Tibial artery (tissue), 4 donors: ENCODE measurements at regions of chr2 and their contacts with region 1.

Region 1: DNA sequence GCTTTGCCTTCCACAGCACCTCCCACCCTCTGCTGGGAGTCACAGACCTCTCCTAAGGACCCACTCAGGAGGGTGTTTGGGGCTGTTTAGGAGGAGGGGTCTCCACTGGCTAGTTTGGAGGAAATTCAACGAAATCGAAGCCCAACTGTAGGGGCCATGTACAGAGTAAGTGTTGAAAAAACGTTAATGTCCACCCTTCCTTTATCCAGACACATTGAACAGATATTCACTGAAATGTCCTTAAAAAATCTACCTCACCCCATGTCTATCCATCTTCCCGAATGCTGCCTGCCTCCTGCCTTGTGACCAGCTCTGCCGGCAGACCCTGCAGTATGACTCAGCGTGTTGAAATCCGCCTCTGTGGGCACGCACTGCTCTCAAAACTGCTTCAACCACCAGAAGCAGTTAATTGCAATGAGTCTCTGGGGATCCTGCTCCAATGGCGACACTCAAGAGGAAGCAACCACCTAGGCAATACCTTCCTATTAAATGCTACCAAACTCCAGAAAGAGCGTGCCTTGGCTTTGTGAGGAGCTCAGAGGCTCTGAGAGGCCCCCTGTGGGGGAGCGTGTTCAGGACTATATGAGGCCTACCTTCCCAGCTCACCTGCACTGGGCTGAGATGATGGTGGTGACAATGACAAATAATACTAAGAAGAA is 61.4 kb upstream of the RTN4 start:
- DNase-seq: peak; percentile 90 to 94
- H3K4me3 ChIP-seq: peak overlapping the region in 1 of 2 donors; percentile 21
- H3K27ac ChIP-seq: peak overlapping the region; percentile 89 to 93
- H3K4me1 ChIP-seq: peaks cover 6 to 65% (median 25%) of the 10 kb centered on the region in 4 donors
- H3K27me3 ChIP-seq: no peaks in the 10 kb centered on the region
- CTCF ChIP-seq: no peak

Region 2: DNA sequence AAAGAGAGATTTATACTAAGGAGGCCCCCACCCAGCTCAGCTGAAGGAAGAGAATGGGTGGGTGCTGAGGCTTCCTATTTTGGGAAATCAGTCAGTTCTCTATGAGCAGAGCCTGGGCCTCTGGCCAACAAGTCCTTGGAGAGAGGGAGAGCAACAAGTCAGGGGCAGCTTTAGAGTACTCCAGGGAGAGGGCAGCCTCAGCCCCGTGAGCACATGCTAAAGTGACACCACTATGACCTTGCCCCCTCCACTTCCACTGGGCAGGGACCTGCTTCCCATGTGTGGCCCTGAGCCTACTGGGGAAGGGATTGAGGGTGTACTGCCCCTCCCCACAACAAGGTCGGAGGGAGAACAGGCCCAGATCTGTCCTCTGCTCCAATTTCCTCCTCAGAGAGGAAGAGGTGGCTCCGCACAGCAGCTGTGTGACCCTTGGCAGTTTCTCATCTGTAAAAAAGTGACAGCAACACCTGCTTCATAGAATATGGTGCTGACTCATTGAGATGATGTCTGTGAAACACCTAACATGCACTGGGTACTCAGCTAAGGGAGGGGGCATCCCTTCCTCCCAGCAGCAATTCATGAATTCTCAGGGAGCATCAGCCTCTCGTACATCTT is 47.4 kb after region 1 on chr2:
- intact Hi-C with region 1: loop called (anchors 5 kb)
- DNase-seq: peak; percentile 77 to 88
- H3K4me3 ChIP-seq: no peak overlapping the region
- H3K27ac ChIP-seq: peak overlapping the region; percentile 68 to 78
- H3K4me1 ChIP-seq: peaks cover 6 to 78% (median 68%) of the 10 kb centered on the region in 4 donors
- H3K27me3 ChIP-seq: no peaks in the 10 kb centered on the region
- CTCF ChIP-seq: no peak

Region 3: DNA sequence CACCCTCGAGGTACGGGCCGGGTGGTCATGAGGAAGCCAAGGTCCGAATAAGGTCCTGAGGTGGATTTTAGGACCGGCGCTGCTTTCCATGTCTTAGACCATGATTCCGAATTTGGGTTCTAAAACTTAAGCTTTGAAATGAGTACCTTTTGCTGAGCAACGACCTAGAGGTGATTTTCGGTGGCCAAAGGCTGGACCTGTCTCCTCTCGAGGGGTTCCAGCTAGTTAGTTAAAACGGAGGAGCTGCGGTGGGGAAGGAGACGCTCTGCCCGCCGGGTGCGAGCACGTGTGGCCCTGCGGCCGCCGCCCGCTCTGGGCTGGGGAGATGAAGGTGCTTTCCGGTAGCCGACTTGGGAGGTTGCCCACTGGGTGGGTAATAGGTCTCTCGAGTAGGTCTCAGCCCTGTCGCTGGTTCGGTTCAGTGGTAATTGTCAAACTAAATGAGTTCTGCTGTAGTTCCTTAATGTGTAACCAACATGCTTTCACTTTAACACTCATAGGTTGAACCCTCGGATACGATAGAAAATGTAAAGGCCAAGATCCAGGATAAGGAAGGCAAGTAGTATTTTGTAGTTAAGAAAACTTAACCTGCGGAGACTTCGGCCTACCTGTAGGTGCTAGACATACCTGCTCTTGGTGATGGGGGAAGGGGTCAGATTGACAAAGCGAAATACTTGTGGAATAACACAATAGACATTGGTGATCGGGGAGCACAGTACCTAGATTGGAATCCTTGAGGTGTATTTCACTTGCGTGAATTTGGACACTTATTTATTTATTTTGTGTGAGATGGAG is 121.4 kb after region 1 on chr2:
- intact Hi-C with region 1: no loop called
- DNase-seq: peak; percentile 36 to 66
- H3K4me3 ChIP-seq: peak overlapping the region; percentile 64 to 84
- H3K27ac ChIP-seq: peak overlapping the region; percentile 87 to 91
- H3K4me1 ChIP-seq: peaks cover 0 to 29% (median 20%) of the 10 kb centered on the region in 4 donors
- H3K27me3 ChIP-seq: no peaks in the 10 kb centered on the region
- CTCF ChIP-seq: no peak